Left colon (tissue), 2 donors: ENCODE measurements at regions of chr11 and their contacts with region 1.

Region 1: GRCh38 chr11:7208391-7208790 is 43.3 kb upstream of the SYT9 start:
- DNase-seq: no peak
- ATAC-seq: no peak

Region 2: DNA sequence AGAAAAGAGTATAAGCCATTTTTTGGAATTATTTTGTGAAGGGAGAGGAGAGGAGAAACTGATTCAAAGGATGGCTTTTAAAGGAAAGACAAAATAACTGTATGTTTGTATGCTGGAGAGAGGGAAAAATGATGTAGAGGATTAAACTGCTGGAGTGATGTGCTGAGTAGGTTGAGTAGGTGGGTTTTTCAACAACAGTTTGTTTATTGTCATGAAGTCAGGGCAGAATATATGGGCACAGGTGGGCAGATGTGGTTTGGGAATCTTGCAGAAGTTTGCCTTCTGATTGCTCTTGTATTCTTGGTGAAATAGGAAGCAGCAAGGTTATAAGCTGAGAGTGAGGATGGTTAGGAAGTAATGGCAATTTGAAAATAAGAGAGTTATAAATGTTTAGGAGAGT is 55.5 kb after region 1 on chr11:
- intact Hi-C with region 1: loop called in 1 of 2 experiments (anchors 2 kb)
- DNase-seq: no peak
- ATAC-seq: no peak

Region 3: GRCh38 chr11:7299393-7299792 is 91.0 kb after region 1 on chr11:
- intact Hi-C with region 1: no loop called
- DNase-seq: no peak
- ATAC-seq: no peak